Posterior cingulate gyrus (tissue), 11 donors: ENCODE measurements at regions of chr10 and their contacts with region 1.

Region 1: GRCh38 chr10:73625884-73626752 is 15.2 kb downstream of the MYOZ1 start:
- DNase-seq: peak; percentile 70 to 98 (median 84)

Region 2: GRCh38 chr10:73287441-73287840 is 338.7 kb before region 1 on chr10:
- intact Hi-C with region 1: no loop called
- DNase-seq: no peak

Region 3: DNA sequence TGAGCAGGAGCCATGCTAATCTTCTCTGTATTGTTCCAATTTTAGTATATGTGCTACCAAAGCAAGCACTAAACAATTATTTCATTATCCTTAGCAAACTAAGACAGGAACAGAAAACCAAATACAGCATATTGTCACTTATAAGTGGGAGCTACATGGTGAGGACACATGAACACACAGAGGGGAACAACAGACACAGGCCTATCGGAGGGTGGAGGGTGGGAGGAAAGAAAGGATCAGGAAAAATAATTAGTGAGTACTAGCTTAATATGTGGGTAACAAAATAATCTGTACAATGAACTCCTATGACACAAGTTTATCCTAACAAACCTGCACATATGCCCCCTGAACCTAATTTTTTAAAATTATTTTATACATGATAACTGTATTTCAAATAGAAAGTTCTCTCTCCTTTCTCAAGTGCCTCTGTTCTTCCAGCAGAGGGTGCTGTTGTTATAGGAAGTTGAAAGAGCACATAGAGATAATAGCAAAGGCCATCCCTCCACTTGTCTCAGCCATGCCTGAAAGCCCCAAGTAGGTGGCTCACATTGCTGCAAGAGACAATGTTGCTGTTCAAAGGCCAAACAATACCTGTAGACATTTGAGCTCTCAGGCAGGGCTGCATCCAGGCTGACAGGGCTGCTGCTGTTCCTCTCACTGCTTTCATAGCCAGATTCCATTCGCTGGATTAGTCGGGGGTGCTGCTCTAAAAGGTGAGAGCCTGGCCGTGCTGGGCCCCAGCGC is 96.9 kb before region 1 on chr10:
- intact Hi-C with region 1: loop called (anchors 5 kb)
- DNase-seq: peak in 3 of 10 donors; percentile 16 to 44 (median 18)